BJ (cell line): ENCODE measurements at regions of chr2 and their contacts with region 1.

Region 1: DNA sequence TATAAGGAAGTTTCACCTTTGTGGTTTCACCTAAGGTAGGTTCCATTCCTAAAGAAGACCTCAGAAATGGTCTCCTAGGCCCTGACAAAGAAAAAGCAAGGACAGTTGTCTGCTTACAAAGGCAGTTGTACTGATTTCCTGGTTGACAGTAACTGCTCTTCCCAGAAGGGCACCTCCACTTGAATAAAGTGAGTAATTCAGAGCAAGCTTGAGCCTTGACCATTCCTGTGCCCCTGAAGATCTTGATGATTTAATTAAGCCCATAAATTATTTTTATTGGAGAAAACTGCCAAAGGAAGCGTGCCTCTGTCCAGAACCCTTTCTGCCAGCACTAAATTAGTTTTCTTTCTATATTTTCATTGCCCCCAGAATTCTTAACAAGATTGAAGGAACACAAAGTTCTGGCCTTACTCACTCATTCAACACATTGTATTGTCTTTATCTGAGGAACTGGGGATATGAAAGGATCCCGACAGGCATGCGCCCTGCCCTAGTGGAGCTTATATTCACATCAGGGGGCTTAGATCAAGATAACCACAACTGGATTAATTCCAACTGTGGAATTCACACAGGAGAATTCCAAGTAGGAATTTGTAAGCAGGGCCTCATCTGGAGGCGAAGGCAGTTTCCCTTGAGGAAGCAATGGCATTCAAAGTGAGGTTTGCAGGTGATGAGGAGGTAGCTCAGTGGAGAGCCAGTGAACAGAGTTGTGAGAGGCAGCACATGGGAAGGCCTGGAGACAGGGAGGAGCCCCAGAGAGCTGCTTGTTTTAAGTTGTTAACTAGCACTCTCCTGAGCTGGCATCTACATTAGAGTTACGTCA is 21.2 kb downstream of the PTRHD1 start:
- DNase-seq: no peak
- H3K4me3 ChIP-seq: no peak overlapping the region
- H3K27me3 ChIP-seq: no peaks in the 10 kb centered on the region
- CTCF ChIP-seq: no peak

Region 2: GRCh38 chr2:25041928-25042320 is 269.9 kb after region 1 on chr2 and contains the start of gene EFR3B:
- CTCF ChIA-PET with region 1: no interaction called
- POLR2A ChIA-PET with region 1: no interaction called
- DNase-seq: peak; percentile 54
- H3K4me3 ChIP-seq: peak within 1 kb of the TSS; percentile 57
- H3K27me3 ChIP-seq: peaks cover 7% of the 10 kb centered on the region
- CTCF ChIP-seq: no peak
- polyA plus RNA-seq, gene EFR3B: 0.11 and 0.18 TPM in 2 replicates

Region 3: GRCh38 chr2:25215948-25216679 is 444.1 kb after region 1 on chr2:
- CTCF ChIA-PET with region 1: no interaction called
- POLR2A ChIA-PET with region 1: interaction called, 12 read pairs
- DNase-seq: no peak
- H3K4me3 ChIP-seq: peak overlapping the region; percentile 48
- H3K27me3 ChIP-seq: no peaks in the 10 kb centered on the region
- CTCF ChIP-seq: no peak